Heart left ventricle (tissue), 16 donors: ENCODE measurements at regions of chr5 and their contacts with region 1.

Region 1: GRCh38 chr5:159174511-159175168 is 34.7 kb downstream of the RNF145 start:
- DNase-seq: no peak
- ATAC-seq: peak in 3 of 4 donors; percentile 62 to 71 (median 64)
- H3K4me3 ChIP-seq: no peak overlapping the region
- H3K27ac ChIP-seq: peak overlapping the region; percentile 27 to 67 (median 55)
- H3K4me1 ChIP-seq: peaks cover 8 to 57% (median 34%) of the 10 kb centered on the region in 12 donors
- H3K27me3 ChIP-seq: no peaks in the 10 kb centered on the region
- CTCF ChIP-seq: no peak
- POLR2A ChIP-seq: no peak

Region 2: GRCh38 chr5:158382473-158382872 is 792.2 kb before region 1 on chr5:
- intact Hi-C with region 1: no loop called
- DNase-seq: peak; percentile 43 to 75 (median 67)
- ATAC-seq: peak; percentile 76 to 96 (median 93)
- H3K4me3 ChIP-seq: no peak overlapping the region
- H3K27ac ChIP-seq: peak overlapping the region in 2 of 12 donors; percentile 1 to 64
- H3K4me1 ChIP-seq: peaks cover 0 to 38% (median 3%) of the 10 kb centered on the region in 12 donors
- H3K27me3 ChIP-seq: peaks cover 0 to 4% (median 0%) of the 10 kb centered on the region in 9 donors
- CTCF ChIP-seq: no peak
- POLR2A ChIP-seq: no peak

Region 3: DNA sequence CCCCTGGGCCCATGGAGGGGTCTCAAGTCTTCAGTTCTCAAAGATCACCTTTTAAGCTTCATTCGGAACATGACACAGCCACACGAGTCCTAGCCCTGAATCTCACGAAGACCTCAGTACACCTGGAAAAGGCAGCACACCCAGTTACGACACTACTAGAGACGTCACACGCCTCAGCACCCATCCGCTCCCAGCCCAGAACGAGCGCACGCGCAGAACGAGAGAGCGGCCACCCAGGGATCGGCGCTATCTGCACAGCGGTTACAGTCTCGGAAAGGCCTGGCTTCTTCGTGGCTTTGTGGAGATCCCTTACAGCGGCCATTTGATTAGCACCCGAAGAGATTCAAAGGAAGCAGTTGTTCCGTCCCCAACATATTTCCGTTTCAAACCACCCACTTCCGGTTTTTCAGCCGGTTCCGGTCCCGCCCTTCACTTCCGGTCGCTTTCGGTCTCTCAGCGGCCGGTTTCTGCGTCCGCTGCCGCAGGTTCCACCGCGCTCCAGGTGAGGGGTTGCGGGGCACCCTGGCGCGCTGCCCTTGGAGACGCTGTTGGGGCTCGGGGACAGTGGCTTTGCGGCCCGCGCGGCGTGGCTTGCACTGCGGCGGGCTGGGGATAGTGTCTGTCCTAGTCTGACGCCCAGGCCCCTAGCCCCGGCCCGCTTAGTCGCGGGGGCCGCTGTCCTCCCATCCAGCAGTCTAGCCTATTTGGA is 88.4 kb after region 1 on chr5 and contains the start of gene UBLCP1:
- intact Hi-C with region 1: loop called in 1 of 10 experiments (anchors 5 kb)
- DNase-seq: peak; percentile 81 to 89 (median 83)
- ATAC-seq: peak; percentile 90 to 96 (median 95)
- H3K4me3 ChIP-seq: peak within 1 kb of the TSS; percentile 59 to 98 (median 90)
- H3K27ac ChIP-seq: peak within 1 kb of the TSS; percentile 79 to 97 (median 90)
- H3K4me1 ChIP-seq: peaks cover 0 to 24% (median 14%) of the 10 kb centered on the region in 12 donors
- H3K27me3 ChIP-seq: no peaks in the 10 kb centered on the region
- CTCF ChIP-seq: peak in 1 of 12 donors; percentile 15
- POLR2A ChIP-seq: peak in 1 of 2 donors; percentile 50
- total RNA-seq, gene UBLCP1: 11.9 to 20.4 (median 14.4) TPM

Region 4: GRCh38 chr5:159362220-159362619 is 187.6 kb after region 1 on chr5:
- intact Hi-C with region 1: no loop called
- DNase-seq: no peak
- ATAC-seq: peak in 3 of 4 donors; percentile 24 to 59 (median 26)
- H3K4me3 ChIP-seq: no peak overlapping the region
- H3K27ac ChIP-seq: no peak overlapping the region
- H3K4me1 ChIP-seq: peaks cover 0 to 13% (median 0%) of the 10 kb centered on the region in 12 donors
- H3K27me3 ChIP-seq: peaks cover 0 to 11% (median 0%) of the 10 kb centered on the region in 9 donors
- CTCF ChIP-seq: no peak
- POLR2A ChIP-seq: no peak

Region 5: DNA sequence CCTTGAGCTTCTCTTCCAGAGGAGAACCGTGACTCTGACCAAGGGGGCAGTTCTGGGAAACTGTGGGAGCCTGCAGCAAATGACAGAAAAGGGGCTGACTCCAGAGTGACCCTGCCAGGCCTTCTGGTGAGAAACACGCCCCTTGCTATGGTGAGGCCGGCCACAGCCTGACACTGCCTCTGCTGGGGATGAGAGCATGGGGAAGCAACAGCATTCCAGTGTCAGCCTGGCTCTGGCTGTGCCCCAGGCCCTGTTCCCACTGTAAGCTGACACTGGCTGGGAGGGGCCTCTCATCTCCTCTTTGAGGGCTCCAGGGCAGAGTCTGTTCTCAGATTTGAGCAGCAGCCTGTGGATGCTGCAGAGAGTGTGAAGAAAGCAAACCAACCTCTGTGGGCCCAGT is 335.6 kb after region 1 on chr5:
- intact Hi-C with region 1: no loop called
- DNase-seq: peak; percentile 79 to 91 (median 86)
- ATAC-seq: peak; percentile 94 to 97 (median 96)
- H3K4me3 ChIP-seq: no peak overlapping the region
- H3K27ac ChIP-seq: peak overlapping the region; percentile 54 to 90 (median 80)
- H3K4me1 ChIP-seq: peaks cover 0 to 33% (median 14%) of the 10 kb centered on the region in 12 donors
- H3K27me3 ChIP-seq: no peaks in the 10 kb centered on the region
- CTCF ChIP-seq: peak in 3 of 12 donors; percentile 23 to 34 (median 24)
- POLR2A ChIP-seq: peak in 1 of 2 donors; percentile 47